Left ventricle myocardium inferior (tissue), 1 donor: ENCODE measurements at regions of chr18 and their contacts with region 1.

Region 1: GRCh38 chr18:48445540-48445939 is 36.4 kb upstream of the ZBTB7C start:
- DNase-seq: peak; percentile 64
- H3K4me3 ChIP-seq: no peak overlapping the region
- H3K27ac ChIP-seq: no peak overlapping the region
- H3K4me1 ChIP-seq: peaks cover 29% of the 10 kb centered on the region
- H3K27me3 ChIP-seq: no peaks in the 10 kb centered on the region
- CTCF ChIP-seq: peak; percentile 89

Region 2: DNA sequence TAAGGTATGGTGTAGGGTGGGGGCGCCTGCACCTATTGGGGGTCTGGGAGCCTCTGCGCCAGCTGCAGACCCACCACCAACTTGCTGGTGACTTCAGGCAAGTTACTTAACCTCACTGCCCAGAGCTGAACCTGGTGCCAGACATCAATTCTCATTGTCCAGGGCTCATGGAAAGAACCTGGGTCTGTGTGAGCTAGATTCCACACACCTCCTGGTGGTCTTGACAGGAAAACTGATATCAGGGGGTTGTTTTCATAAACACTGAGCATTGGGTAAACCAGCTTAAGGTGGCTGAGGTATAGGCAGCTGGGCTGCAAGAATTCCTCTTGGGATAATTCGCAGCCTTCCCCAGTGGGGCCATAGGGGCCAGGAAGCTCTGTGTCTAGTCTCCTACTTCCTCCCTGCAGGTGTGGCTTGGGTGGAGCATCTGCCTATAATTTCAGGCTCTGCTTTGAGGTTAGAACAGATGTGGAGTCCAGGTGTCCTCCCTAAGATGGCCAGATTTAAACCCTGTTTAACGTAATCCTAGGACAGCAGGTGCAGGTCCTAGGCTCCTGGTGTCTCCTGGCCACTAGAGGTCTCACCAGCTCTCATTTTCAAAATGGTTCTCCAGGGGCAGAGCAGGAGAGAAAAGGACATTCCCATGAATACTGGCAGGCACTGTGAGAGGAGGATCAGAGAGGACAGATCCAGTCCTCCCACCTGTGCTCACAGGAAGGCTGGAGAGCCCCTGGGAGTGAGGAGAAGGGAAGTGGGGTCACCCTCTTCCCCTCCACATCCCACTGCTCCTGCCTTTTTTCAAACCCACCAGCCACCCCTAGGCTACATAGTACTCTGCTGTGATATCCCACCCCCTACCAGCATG is 414.7 kb before region 1 on chr18:
- intact Hi-C with region 1: loop called (anchors 2 kb)
- DNase-seq: no peak
- H3K4me3 ChIP-seq: no peak overlapping the region
- H3K27ac ChIP-seq: no peak overlapping the region
- H3K4me1 ChIP-seq: peaks cover 24% of the 10 kb centered on the region
- H3K27me3 ChIP-seq: no peaks in the 10 kb centered on the region
- CTCF ChIP-seq: peak; percentile 82

Region 3: DNA sequence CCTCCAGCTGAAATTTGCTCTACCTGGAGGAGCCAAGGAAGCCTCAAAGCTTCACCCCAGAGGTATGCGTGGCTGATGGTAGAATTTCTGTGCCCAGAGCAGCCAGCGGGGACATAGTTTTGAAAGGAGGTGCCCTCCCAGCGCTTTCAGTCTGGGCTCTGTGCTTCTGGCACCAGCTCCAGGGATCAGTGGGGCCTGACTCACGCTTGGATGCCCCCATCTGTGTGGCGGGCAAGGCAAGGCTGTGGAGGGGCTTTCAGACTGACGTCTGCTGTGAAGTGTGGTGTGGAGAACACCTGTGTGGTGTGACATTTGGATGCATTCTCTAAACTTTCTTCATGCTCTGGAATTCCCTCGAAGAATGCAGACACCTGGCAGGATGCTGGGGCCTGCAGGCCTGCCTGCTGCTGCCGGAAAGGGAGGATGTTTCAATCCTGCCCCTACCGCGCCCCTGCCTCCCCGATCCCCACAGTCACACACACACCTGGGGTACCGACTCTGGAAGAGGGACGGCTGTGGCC is 177.4 kb after region 1 on chr18:
- intact Hi-C with region 1: no loop called
- DNase-seq: no peak
- H3K4me3 ChIP-seq: no peak overlapping the region
- H3K27ac ChIP-seq: no peak overlapping the region
- H3K4me1 ChIP-seq: peaks cover 10% of the 10 kb centered on the region
- H3K27me3 ChIP-seq: no peaks in the 10 kb centered on the region
- CTCF ChIP-seq: no peak